ENCODE measurements at regions of chr3 and their contacts with region 1.

Region 1: GRCh38 chr3:119918992-119919933 is 137.4 kb downstream of the NR1I2 start:
- DNase-seq: no peak
- H3K4me3 Mint-ChIP-seq: no peak overlapping the region
- H3K27ac Mint-ChIP-seq: no peak overlapping the region
- H3K4me1 Mint-ChIP-seq: peaks cover 10% of the 10 kb centered on the region
- H3K27me3 Mint-ChIP-seq: no peaks in the 10 kb centered on the region

Region 2: DNA sequence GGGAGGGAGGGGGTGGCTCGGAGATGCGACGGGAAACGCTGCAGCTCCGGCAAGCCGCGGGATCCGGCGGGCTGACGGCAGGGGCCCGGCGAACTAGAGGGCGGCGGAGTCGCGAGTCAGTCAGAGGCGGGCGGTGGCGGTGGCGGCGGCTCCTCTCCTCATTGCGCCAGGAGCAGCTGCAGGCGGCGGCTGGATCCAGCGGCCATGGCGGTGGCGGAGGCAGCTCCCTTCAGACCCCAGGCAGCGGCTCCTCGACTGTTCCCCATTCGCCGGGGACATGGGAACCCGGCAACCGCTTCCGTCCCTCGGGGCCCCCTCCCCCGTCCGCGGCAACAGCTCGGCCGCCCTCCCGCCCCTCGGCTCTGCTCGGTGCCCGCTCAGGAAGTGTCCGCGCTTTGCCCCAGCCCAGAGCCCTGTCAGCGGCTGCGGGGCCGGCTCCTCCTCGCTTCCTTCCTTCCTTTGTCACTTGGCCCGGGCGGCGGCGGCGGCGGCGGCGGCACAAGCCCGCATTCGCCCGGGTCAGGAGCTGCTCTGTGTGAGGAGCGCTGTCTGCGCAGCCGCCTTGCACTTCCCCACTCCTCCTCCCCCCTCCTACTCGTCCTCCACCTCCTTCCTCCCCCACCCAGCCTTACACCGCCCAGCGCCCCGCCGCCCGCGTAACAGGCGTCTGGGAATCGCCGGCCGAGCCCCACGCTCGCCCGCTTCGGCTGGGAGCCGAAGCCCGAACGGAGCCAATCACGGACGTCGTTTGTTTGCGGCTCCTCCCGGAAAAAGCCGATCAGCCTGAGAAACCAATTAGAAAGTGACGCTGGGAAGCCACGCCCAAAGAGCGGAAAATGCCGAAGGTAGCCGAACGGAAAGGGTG is 174.9 kb after region 1 on chr3 and contains the start of gene GSK3B:
- CTCF ChIA-PET with region 1: no interaction called
- POLR2A ChIA-PET with region 1: interaction called, 11 read pairs
- DNase-seq: peak; percentile 78
- H3K4me3 Mint-ChIP-seq: no peak within 1 kb of the TSS
- H3K27ac Mint-ChIP-seq: no peak within 1 kb of the TSS
- H3K4me1 Mint-ChIP-seq: peaks cover 25% of the 10 kb centered on the region
- H3K27me3 Mint-ChIP-seq: no peaks in the 10 kb centered on the region
- total RNA-seq, gene GSK3B: 38.3 to 39.5 TPM

Measured in activated CD4-positive, alpha-beta T cell treated with anti-CD3 and anti-CD28 coated beads, Interleukin-2, amount 10 ng/mL, durations not matched to agents 7 days and 5 days (primary cell).